ENCODE measurements at regions of chr11 and their contacts with region 1.

Region 1: DNA sequence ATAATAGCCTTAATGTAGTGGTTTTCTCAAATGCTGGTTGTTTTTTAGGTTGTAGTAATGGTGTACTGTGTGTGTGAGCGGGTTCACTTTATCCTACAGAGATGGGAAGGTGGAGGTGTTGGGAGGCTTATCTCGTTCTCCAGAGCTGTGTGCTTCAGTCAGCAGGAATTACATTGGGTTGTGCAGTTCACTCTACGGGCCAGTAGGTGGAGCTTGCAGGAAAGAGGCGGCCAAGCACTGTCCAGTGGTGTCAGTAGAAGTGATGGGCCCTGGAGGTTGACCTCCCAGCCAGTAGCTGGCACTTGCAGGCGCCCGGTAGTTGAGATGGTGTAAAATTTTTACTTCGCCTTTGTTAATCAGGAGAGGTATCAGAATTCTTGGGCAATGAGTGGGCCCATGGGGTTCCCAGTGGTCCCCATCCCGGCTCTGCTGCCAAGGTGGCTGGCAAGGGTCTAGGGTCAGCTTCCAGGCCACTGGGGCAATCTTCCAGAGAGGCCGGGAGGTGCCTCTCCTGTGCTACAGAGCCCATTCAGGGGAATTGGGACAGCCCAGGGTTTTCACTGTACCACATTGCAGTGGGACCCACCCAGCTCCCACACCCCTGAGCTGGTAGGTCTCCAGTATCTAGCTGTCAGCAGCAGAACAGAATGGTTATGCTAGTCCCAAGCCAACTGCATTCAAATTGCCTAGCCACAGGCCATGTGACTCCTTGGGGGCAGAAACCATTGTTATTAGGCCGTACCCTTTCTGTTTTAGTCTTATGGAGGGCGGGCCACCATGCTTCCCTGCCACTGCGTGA is 43.9 kb downstream of the BIRC2 start:
- DNase-seq: peak; percentile 64
- ATAC-seq: peak; percentile 70
- H3K4me3 Mint-ChIP-seq: no peak overlapping the region
- H3K27ac Mint-ChIP-seq: no peak overlapping the region
- H3K4me1 Mint-ChIP-seq: peaks cover 26% of the 10 kb centered on the region
- H3K27me3 Mint-ChIP-seq: no peaks in the 10 kb centered on the region

Region 2: DNA sequence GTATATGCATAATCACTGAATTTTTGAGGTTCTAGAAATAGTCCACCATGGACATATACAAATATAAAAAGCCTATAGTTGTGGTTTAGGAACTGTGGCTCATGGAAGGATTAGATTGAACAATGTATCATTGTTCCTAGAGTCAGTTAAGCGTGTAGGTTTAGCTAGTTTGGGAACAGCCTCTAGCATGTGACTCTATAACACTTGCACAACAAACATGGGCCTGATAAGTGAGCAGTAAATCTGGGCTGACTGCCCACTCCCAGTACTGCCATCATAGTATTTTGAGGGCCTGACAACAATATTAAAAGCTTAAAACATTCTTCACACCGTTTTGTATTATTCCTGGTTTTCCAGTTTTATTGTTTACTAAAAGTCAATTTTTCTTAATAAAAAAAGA is 233.6 kb before region 1 on chr11:
- CTCF ChIA-PET with region 1: no interaction called
- POLR2A ChIA-PET with region 1: no interaction called
- DNase-seq: no peak
- ATAC-seq: no peak
- H3K4me3 Mint-ChIP-seq: no peak overlapping the region
- H3K27ac Mint-ChIP-seq: no peak overlapping the region
- H3K4me1 Mint-ChIP-seq: no peaks in the 10 kb centered on the region
- H3K27me3 Mint-ChIP-seq: peaks cover 2% of the 10 kb centered on the region

Region 3: GRCh38 chr11:102367364-102367763 is 23.5 kb before region 1 on chr11:
- CTCF ChIA-PET with region 1: interaction called, 41 read pairs
- POLR2A ChIA-PET with region 1: no interaction called
- DNase-seq: no peak
- ATAC-seq: peak; percentile 64
- H3K4me3 Mint-ChIP-seq: no peak overlapping the region
- H3K27ac Mint-ChIP-seq: peak overlapping the region; percentile 37
- H3K4me1 Mint-ChIP-seq: peaks cover 29% of the 10 kb centered on the region
- H3K27me3 Mint-ChIP-seq: no peaks in the 10 kb centered on the region

Region 4: GRCh38 chr11:102375720-102376399 is 15.0 kb before region 1 on chr11:
- CTCF ChIA-PET with region 1: interaction called, 18 read pairs
- POLR2A ChIA-PET with region 1: no interaction called
- DNase-seq: no peak
- ATAC-seq: no peak
- H3K4me3 Mint-ChIP-seq: no peak overlapping the region
- H3K27ac Mint-ChIP-seq: no peak overlapping the region
- H3K4me1 Mint-ChIP-seq: peaks cover 18% of the 10 kb centered on the region
- H3K27me3 Mint-ChIP-seq: no peaks in the 10 kb centered on the region

Region 5: DNA sequence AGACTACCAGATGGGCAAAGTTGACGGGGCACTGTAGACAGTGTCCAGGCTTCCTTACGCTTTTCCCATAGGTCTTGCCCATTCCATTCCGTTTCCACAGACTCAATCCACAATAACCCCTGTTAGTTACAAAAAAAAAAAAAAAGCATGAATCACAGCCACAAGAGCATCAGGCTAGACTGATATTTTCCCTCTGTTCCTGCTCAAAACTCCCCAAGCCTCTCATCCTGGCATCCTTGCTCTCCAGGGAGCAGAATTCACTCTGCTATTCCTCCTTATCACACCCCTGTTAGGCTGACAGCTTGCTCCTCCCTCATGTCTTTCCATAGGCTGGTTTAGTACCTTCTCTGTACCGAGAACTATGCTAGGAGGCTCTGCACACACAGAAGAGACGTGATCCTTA is 19.5 kb after region 1 on chr11:
- CTCF ChIA-PET with region 1: interaction called, 39 read pairs
- POLR2A ChIA-PET with region 1: no interaction called
- DNase-seq: no peak
- ATAC-seq: no peak
- H3K4me3 Mint-ChIP-seq: no peak overlapping the region
- H3K27ac Mint-ChIP-seq: no peak overlapping the region
- H3K4me1 Mint-ChIP-seq: peaks cover 72% of the 10 kb centered on the region
- H3K27me3 Mint-ChIP-seq: no peaks in the 10 kb centered on the region

Region 6: GRCh38 chr11:102451681-102452460 is 61.0 kb after region 1 on chr11:
- CTCF ChIA-PET with region 1: interaction called, 33 read pairs
- POLR2A ChIA-PET with region 1: interaction called, 4 read pairs
- DNase-seq: peak; percentile 87
- ATAC-seq: peak; percentile 61
- H3K4me3 Mint-ChIP-seq: peak overlapping the region; percentile 97
- H3K27ac Mint-ChIP-seq: peak overlapping the region; percentile 92
- H3K4me1 Mint-ChIP-seq: peaks cover 77% of the 10 kb centered on the region
- H3K27me3 Mint-ChIP-seq: no peaks in the 10 kb centered on the region

Region 7: GRCh38 chr11:102476812-102477211 is 85.9 kb after region 1 on chr11:
- CTCF ChIA-PET with region 1: interaction called, 17 read pairs
- POLR2A ChIA-PET with region 1: no interaction called
- DNase-seq: peak; percentile 69
- ATAC-seq: peak; percentile 97
- H3K4me3 Mint-ChIP-seq: peak overlapping the region; percentile 12
- H3K27ac Mint-ChIP-seq: peak overlapping the region; percentile 90
- H3K4me1 Mint-ChIP-seq: peaks cover 57% of the 10 kb centered on the region
- H3K27me3 Mint-ChIP-seq: no peaks in the 10 kb centered on the region

Region 8: GRCh38 chr11:102488208-102488607 is 97.3 kb after region 1 on chr11:
- CTCF ChIA-PET with region 1: interaction called, 15 read pairs
- POLR2A ChIA-PET with region 1: no interaction called
- DNase-seq: no peak
- ATAC-seq: no peak
- H3K4me3 Mint-ChIP-seq: no peak overlapping the region
- H3K27ac Mint-ChIP-seq: no peak overlapping the region
- H3K4me1 Mint-ChIP-seq: peaks cover 36% of the 10 kb centered on the region
- H3K27me3 Mint-ChIP-seq: no peaks in the 10 kb centered on the region

Region 9: GRCh38 chr11:102680945-102681344 is 290.1 kb after region 1 on chr11:
- CTCF ChIA-PET with region 1: no interaction called
- POLR2A ChIA-PET with region 1: no interaction called
- DNase-seq: no peak
- ATAC-seq: no peak
- H3K4me3 Mint-ChIP-seq: no peak overlapping the region
- H3K27ac Mint-ChIP-seq: no peak overlapping the region
- H3K4me1 Mint-ChIP-seq: no peaks in the 10 kb centered on the region
- H3K27me3 Mint-ChIP-seq: peaks cover 22% of the 10 kb centered on the region

Measured in activated CD8-positive, alpha-beta T cell treated with anti-CD3 and anti-CD28 coated beads, Interleukin-2, amount 10 ng/mL, durations not matched to agents 7 days and 5 days (primary cell).